Posterior vena cava (tissue), 2 donors: ENCODE measurements at regions of chr12 and their contacts with region 1.

Region 1: DNA sequence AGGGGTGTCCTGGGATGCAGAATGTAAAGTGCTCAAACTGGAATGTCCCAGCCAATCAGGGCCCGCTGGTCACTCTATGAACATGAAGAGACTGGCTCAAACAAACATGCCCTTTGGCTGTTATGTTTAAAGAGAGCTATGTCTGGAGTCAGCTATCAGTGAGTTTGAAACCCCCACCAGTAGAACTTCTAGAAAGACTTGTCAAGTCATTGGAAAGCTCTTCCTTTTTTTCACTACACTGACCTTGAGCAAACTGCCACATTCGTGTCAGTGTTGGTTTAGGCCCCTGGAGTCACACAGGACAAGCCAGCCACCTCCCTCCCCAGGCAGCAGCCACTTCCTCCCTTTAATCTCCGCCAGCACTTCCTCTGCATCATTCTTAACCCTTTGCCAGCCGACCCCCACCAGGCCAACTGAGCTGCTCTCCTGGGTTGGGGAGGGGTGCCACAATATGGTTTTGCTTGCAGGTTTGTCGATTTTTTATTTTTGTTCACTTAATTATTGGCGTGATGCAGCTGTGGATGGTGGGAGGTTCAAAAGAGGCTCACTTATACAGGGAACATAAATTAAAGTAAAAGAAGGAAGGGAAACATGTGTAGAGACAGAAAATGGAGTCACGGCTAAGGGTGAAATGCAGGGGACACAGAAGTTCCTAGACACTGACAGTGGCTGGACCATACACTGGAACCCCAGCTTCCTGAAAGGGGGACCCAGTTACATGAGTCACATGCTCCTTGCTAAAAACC is 25.3 kb downstream of the CMKLR1 start:
- DNase-seq: peak; percentile 81

Region 2: DNA sequence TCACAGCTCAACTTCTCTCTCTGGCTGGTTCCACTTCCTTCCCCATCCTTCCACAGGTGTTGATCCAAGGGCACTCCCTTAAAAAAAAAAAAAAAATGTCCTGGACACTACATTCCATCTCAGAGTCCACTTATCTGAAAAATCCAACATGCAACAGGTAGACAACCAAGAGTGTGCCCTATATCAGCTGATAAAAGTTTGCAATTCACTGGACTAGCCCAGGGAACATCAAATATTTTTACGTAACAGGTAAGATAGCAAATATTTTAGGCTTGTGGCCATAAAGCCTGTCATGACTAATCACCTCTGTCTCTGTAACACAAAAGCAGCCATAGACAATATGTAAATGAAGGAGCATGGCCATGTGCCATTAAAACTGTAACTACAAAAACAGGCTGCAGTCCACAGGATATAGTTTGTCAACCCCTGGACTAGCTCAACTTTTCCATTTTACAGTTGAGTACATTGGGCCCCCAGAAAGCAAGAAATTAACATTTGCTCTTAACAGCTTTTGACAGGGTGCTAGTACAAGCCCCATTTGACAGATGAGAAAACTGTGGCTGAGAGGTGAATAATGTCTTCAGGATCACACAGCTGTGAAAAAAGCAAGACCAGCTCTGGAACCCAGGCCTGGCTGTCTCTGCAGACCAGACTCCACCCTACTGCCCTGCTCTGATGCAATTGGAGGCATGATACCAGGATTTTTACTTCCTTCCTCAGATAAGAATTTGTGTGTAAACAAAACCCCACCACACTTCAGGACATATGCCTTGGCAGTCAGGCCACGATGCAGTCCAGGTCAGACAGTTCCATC is 43.5 kb before region 1 on chr12:
- intact Hi-C with region 1: no loop called
- DNase-seq: no peak

Region 3: GRCh38 chr12:108367436-108367835 is 53.7 kb after region 1 on chr12:
- intact Hi-C with region 1: no loop called
- DNase-seq: no peak

Region 4: GRCh38 chr12:109291521-109292341 is 978.0 kb after region 1 on chr12:
- intact Hi-C with region 1: loop called in 1 of 2 experiments (anchors 5 kb)
- DNase-seq: peak; percentile 88